ENCODE measurements at regions of chr6 and their contacts with region 1.

Region 1: GRCh38 chr6:106739387-106739786 is 110.0 kb downstream of the QRSL1 start:
- DNase-seq: peak; percentile 27 to 89
- H3K4me3 ChIP-seq: no peak overlapping the region
- H3K27ac ChIP-seq: no peak overlapping the region
- H3K4me1 ChIP-seq: peaks cover 0 to 2% of the 10 kb centered on the region in 2 donors
- H3K27me3 ChIP-seq: no peaks in the 10 kb centered on the region
- CTCF ChIP-seq: peak in 1 of 3 experiments; percentile 27

Region 2: DNA sequence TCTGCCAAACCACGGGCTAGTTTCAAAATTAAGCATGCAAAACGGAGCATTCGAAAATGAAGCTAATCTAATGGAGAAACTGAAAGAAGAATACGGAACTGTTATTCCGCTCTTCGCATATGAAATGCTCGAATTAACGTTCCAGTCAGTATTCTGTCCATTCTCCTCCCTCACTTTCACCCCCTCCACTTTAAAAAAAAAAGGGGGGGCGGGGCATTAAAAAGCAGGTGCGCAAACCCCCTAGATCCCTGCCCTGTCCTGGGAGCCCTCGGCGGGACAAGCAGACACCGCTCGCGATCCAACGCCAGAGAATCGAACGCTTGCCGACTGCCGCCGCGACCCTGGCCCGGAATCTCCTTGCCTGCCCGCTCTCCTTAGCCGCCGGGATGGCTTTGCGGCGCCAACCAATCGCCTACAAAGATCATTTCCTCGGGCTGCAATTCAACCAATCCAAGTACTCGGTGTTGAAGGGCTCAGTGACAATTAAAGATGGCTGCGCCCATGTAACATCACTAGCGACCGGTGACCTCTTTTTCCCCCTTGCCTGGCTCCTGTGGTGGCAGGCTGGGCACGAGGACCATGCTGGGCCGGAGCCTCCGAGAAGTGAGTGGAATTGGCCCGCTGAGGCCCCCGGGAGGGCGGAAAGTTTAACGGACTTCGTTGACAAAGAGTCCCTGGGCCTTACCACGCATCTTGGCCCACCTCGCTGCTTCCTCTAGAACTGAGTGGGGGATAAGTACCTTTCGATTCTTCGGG is 110.1 kb before region 1 on chr6 and contains the starts of genes QRSL1 and RTN4IP1:
- intact Hi-C with region 1: loop called (anchors 1 kb)
- DNase-seq: peak; percentile 47 to 92
- H3K4me3 ChIP-seq: peak within 1 kb of the TSS; percentile 64 to 91
- H3K27ac ChIP-seq: peak within 1 kb of the TSS; percentile 68 to 71
- H3K4me1 ChIP-seq: peaks cover 0 to 7% of the 10 kb centered on the region in 2 donors
- H3K27me3 ChIP-seq: no peaks in the 10 kb centered on the region
- CTCF ChIP-seq: no peak
- total RNA-seq, gene QRSL1: 3.9 TPM
- total RNA-seq, gene RTN4IP1: 0.43 TPM

Region 3: GRCh38 chr6:108689247-108690161 is 1950.1 kb after region 1 on chr6:
- intact Hi-C with region 1: no loop called
- DNase-seq: peak; percentile 87 to 97
- H3K4me3 ChIP-seq: no peak overlapping the region
- H3K27ac ChIP-seq: peak overlapping the region; percentile 69 to 70
- H3K4me1 ChIP-seq: peaks cover 26 to 51% of the 10 kb centered on the region in 2 donors
- H3K27me3 ChIP-seq: no peaks in the 10 kb centered on the region
- CTCF ChIP-seq: no peak

Measured in ascending aorta (tissue), 2 donors.